Heart right ventricle (tissue), 16 donors: ENCODE measurements at regions of chr2 and their contacts with region 1.

Region 1: DNA sequence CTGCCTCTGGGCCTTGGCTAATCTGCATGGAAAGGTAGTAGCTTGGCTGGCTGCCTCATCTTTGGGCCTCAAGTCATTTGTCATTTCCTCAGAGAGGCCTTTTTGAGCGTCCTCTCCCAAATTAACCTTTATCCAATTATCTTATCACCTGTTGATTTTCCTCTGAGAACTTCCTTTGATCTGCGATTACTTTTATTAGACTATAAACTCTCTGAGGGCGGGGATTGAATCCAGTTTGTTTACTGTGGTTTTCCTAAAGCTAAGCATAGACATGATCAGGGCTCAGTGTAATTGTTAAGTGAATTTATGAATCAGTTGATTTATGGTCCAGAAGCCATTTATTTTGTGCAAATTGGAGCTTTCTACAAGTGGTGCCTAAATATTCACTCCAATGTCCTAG is 7.5 kb downstream of the RPE start:
- DNase-seq: no peak
- ATAC-seq: no peak
- H3K4me3 ChIP-seq: no peak overlapping the region
- H3K27ac ChIP-seq: no peak overlapping the region
- H3K4me1 ChIP-seq: peaks cover 0 to 43% (median 31%) of the 10 kb centered on the region in 9 donors
- H3K27me3 ChIP-seq: no peaks in the 10 kb centered on the region
- CTCF ChIP-seq: no peak

Region 2: DNA sequence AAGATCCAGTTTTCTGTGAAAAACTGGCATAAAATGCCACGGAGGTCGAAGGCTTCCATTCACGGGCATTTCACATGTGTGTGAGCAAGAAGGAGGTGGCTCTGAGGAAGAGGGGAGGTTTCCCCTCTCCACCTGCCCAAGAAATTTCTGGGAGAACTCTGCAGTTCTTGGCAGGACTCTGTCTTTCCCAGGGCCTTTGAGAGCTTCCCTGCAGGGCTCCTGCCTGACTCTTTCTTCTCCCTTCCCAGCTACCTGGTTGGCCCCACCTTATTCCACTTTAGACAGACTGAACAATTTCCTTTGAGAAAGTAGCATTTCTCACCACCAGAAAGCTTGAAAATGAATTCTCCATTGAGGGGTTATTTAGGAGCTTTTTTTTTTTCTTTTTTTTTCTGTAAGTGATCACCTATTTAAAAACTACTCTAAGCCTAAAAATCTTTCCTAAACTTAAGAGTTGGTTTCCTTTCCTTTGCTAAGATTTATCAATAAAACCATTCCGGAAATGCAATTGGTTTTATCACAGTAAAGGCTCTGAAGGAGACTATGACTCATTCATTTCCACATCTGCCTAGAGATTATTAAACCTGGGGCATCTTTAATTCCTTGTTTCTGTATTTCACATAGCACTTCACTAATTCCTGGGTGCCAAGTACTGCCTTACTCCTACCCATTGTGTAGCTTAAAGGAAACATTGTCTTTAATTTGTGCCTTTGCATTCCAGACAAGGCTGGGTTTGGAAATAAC is 179.0 kb before region 1 on chr2:
- intact Hi-C with region 1: no loop called
- DNase-seq: no peak
- ATAC-seq: no peak
- H3K4me3 ChIP-seq: no peak overlapping the region
- H3K27ac ChIP-seq: no peak overlapping the region
- H3K4me1 ChIP-seq: no peaks in the 10 kb centered on the region
- H3K27me3 ChIP-seq: peaks cover 0 to 3% (median 0%) of the 10 kb centered on the region in 7 donors
- CTCF ChIP-seq: no peak

Region 3: DNA sequence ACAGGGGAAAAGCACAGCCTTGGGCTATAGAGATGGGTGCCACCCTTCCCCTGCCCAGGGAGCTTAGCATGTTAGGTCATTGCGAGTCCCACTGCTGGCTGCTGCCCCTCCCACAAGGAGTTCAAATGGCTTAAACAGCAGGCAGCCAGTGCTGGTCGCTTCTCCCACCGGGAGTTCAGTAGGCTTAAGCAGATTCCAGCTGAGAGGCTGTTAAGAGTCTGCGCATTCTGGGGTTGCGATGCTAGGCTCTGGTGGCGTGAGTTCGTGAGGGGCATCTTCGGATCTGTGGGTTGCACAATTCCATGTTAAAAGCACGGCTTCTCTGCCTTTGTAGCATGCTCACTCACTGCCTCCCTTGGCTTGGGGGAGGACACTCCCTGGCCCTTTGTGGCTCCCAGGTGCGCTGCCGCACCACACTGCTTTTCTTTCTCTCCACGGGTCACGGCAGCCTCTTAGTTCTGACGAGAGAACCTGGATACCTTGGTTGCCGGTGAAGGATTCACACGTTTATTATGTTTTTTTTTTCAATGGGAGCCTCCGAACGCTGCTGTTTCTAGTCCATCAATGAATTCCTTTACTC is 145.1 kb before region 1 on chr2:
- intact Hi-C with region 1: no loop called
- DNase-seq: no peak
- ATAC-seq: no peak
- H3K4me3 ChIP-seq: no peak overlapping the region
- H3K27ac ChIP-seq: no peak overlapping the region
- H3K4me1 ChIP-seq: no peaks in the 10 kb centered on the region
- H3K27me3 ChIP-seq: peaks cover 0 to 4% (median 0%) of the 10 kb centered on the region in 7 donors
- CTCF ChIP-seq: no peak

Region 4: GRCh38 chr2:209988010-209988409 is 21.9 kb before region 1 on chr2:
- intact Hi-C with region 1: no loop called
- DNase-seq: no peak
- ATAC-seq: no peak
- H3K4me3 ChIP-seq: no peak overlapping the region
- H3K27ac ChIP-seq: no peak overlapping the region
- H3K4me1 ChIP-seq: peaks cover 0 to 10% (median 0%) of the 10 kb centered on the region in 9 donors
- H3K27me3 ChIP-seq: peaks cover 0 to 14% (median 0%) of the 10 kb centered on the region in 7 donors
- CTCF ChIP-seq: no peak

Region 5: GRCh38 chr2:210063306-210063705 is 53.4 kb after region 1 on chr2:
- intact Hi-C with region 1: loop called in 1 of 10 experiments (anchors 10 kb)
- DNase-seq: no peak
- ATAC-seq: no peak
- H3K4me3 ChIP-seq: no peak overlapping the region
- H3K27ac ChIP-seq: no peak overlapping the region
- H3K4me1 ChIP-seq: no peaks in the 10 kb centered on the region
- H3K27me3 ChIP-seq: no peaks in the 10 kb centered on the region
- CTCF ChIP-seq: no peak

Region 6: GRCh38 chr2:210584834-210585233 is 574.9 kb after region 1 on chr2:
- intact Hi-C with region 1: no loop called
- DNase-seq: no peak
- ATAC-seq: no peak
- H3K4me3 ChIP-seq: no peak overlapping the region
- H3K27ac ChIP-seq: no peak overlapping the region
- H3K4me1 ChIP-seq: no peaks in the 10 kb centered on the region
- H3K27me3 ChIP-seq: no peaks in the 10 kb centered on the region
- CTCF ChIP-seq: no peak